RWPE1 (cell line): ENCODE measurements at regions of chr15 and their contacts with region 1.

Region 1: GRCh38 chr15:33292717-33293307 is 18.0 kb upstream of the RYR3 start:
- DNase-seq: peak; percentile 55
- H3K27ac ChIP-seq: no peak overlapping the region
- CTCF ChIP-seq: peak; percentile 89

Region 2: DNA sequence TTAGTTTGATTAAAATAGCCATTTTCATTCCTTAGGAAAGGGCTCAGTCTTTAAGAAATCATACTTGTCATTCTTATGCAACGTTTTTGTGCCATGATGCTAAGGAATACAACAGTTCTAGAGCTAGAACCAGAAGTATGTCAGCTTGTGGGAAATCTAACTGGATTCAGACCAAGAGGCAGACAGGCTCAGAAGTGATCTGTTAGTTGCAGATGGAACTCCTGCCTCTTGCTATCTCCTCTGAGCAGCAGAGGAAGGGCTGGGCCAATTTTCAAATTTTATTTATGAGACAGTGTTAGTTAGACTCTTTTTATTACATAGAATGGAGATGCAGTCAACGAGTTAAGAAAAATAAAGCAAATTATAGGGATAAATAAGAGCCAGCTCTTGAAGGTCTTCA is 30.5 kb before region 1 on chr15:
- CTCF ChIA-PET with region 1: no interaction called
- POLR2A ChIA-PET with region 1: no interaction called
- DNase-seq: no peak
- H3K27ac ChIP-seq: no peak overlapping the region
- CTCF ChIP-seq: no peak

Region 3: GRCh38 chr15:33506781-33507296 is 214.0 kb after region 1 on chr15:
- CTCF ChIA-PET with region 1: no interaction called
- POLR2A ChIA-PET with region 1: no interaction called
- DNase-seq: no peak
- H3K27ac ChIP-seq: no peak overlapping the region
- CTCF ChIP-seq: no peak

Region 4: GRCh38 chr15:33700695-33701304 is 408.0 kb after region 1 on chr15:
- CTCF ChIA-PET with region 1: interaction called, 34 read pairs
- POLR2A ChIA-PET with region 1: no interaction called
- DNase-seq: peak; percentile 62
- H3K27ac ChIP-seq: no peak overlapping the region
- CTCF ChIP-seq: peak; percentile 98

Region 5: DNA sequence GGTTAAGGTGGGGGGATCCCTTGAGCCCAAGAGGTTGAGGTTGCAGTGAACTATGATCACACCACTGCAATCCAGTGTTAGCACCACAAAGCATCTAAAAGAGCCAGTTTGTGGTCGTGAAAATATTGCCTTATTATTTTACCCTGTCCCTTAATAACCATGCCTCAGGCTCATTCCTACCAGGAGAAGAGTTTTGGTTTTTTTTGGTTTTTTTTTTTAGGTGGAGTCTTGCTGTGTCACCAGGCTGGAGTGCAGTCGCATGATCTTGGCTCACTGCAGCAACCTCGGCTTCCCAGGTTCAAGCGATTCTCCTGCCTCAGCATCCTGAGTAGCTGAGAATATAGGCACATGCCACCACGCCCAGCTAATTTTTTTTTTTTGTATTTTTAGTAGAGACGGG is 764.1 kb after region 1 on chr15:
- CTCF ChIA-PET with region 1: no interaction called
- POLR2A ChIA-PET with region 1: no interaction called
- DNase-seq: no peak
- H3K27ac ChIP-seq: no peak overlapping the region
- CTCF ChIP-seq: no peak